ENCODE measurements at regions of chr2 and their contacts with region 1.

Region 1: GRCh38 chr2:42095923-42096408 is 48.1 kb downstream of the PKDCC start:
- DNase-seq: peak; percentile 82 to 89 (median 84)
- ATAC-seq: peak; percentile 67
- H3K4me3 ChIP-seq: no peak overlapping the region
- H3K27ac ChIP-seq: no peak overlapping the region
- H3K4me1 ChIP-seq: peaks cover 21% of the 10 kb centered on the region
- H3K27me3 ChIP-seq: no peaks in the 10 kb centered on the region
- CTCF ChIP-seq: peak; percentile 52 to 93 (median 89)
- POLR2A ChIP-seq: no peak

Region 2: DNA sequence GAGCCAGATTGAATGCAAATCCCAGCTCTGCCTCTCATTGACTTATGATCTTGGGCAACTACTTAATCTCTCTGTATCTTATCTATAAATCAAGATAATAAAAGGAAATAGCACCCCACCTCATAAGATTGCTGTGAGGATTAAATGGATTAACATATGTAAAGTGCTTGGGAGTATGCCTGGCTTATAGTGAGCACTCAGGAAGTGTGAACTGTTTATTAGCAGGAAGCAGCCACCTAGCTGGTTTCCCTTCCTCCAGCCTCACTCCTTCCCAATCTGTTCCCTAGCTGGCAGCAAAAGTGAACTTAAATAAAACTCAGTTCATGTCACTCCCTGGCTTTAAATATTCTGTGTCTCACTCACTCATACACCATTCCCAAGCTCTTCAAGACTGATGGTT is 574.8 kb before region 1 on chr2:
- intact Hi-C with region 1: no loop called
- DNase-seq: no peak
- ATAC-seq: no peak
- H3K4me3 ChIP-seq: no peak overlapping the region
- H3K27ac ChIP-seq: no peak overlapping the region
- H3K4me1 ChIP-seq: no peaks in the 10 kb centered on the region
- H3K27me3 ChIP-seq: no peaks in the 10 kb centered on the region
- CTCF ChIP-seq: no peak
- POLR2A ChIP-seq: no peak

Region 3: GRCh38 chr2:42244520-42244919 is 148.6 kb after region 1 on chr2:
- intact Hi-C with region 1: loop called (anchors 5 kb)
- DNase-seq: no peak
- ATAC-seq: no peak
- H3K4me3 ChIP-seq: no peak overlapping the region
- H3K27ac ChIP-seq: no peak overlapping the region
- H3K4me1 ChIP-seq: peaks cover 23% of the 10 kb centered on the region
- H3K27me3 ChIP-seq: no peaks in the 10 kb centered on the region
- CTCF ChIP-seq: no peak
- POLR2A ChIP-seq: no peak

Region 4: DNA sequence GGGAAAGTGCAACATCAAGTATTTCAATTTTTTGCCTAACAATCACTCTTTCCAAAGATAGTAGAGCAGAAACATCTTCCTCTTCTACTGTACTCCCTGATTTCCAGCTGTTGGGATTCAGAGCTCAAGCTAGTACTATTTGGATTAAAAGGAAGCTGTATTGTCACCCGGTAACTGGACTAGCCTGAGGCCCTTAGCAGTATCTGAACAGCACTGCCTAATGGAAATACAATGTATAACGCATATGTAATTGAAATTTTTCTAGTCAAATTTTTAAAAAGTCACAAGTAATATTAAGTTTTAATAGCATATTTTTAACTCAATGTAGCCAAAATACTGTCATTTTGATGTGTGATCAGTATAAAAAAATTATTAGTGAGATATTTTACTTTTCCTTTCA is 178.9 kb after region 1 on chr2:
- intact Hi-C with region 1: no loop called
- DNase-seq: no peak
- ATAC-seq: no peak
- H3K4me3 ChIP-seq: no peak overlapping the region
- H3K27ac ChIP-seq: no peak overlapping the region
- H3K4me1 ChIP-seq: no peaks in the 10 kb centered on the region
- H3K27me3 ChIP-seq: no peaks in the 10 kb centered on the region
- CTCF ChIP-seq: no peak
- POLR2A ChIP-seq: no peak

Region 5: GRCh38 chr2:42339191-42339912 is 243.4 kb after region 1 on chr2:
- intact Hi-C with region 1: loop called (anchors 10 kb)
- DNase-seq: peak in 2 of 4 donors; percentile 25 to 29
- ATAC-seq: no peak
- H3K4me3 ChIP-seq: no peak overlapping the region
- H3K27ac ChIP-seq: peak overlapping the region in 1 of 4 donors; percentile 28
- H3K4me1 ChIP-seq: peaks cover 16% of the 10 kb centered on the region
- H3K27me3 ChIP-seq: no peaks in the 10 kb centered on the region
- CTCF ChIP-seq: no peak
- POLR2A ChIP-seq: no peak